Activated CD4-positive, alpha-beta memory T cell treated with anti-CD3 and anti-CD28 coated beads, Interleukin-2, amount 10 ng/mL, durations not matched to agents 7 days and 5 days (primary cell): ENCODE measurements at regions of chr1 and their contacts with region 1.

Region 1: DNA sequence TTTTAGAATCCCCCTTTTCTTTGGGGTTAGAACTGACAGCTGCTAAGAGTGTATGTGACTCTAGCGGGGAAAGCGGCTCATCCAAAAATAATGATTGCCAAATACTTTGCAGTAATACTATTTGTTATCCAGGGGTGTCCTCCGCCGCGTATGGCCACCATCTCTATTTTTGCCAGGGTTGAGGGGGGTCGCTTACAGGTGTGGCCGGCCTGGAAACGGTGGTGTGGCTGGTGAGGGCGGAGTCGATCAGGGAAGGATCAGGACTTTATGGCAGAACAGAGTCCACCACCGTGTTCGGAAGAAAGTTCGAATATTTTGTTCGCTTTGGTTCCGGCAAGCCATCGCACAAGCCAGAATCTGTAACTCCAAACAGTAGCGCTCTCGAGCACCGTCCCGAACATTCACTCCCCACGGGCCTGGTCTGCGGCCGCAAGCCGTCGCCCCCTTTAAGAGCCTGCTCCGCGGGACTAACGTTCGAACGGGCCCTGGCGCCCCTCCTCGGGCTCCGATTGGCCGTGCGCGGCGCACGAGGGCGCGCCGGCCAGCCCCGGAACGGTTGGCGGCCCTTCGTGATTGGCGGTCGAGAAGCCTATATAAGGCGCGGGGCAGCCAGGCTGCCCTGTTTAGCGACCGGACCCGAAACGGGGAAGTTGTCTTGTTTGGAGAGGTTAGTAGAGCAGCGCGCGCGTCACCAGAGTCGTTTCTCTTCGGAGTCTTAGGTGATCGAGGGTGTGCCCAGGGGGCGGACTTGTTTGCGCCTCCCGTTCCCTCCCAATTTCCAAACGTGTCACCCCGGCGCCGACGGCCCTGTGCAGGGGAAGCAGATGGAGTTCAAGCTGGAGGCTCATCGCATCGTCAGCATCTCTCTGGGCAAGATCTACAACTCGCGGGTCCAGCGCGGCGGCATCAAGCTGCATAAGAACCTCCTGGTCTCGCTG is at the start of gene IER5:
- DNase-seq: peak; percentile 98
- H3K4me3 Mint-ChIP-seq: peak within 1 kb of the TSS; percentile 99
- H3K27ac Mint-ChIP-seq: peak within 1 kb of the TSS; percentile 98
- H3K4me1 Mint-ChIP-seq: peaks cover 55% of the 10 kb centered on the region
- H3K27me3 Mint-ChIP-seq: peaks cover 3% of the 10 kb centered on the region
- total RNA-seq, gene IER5: 41.6 to 43.9 TPM

Region 2: DNA sequence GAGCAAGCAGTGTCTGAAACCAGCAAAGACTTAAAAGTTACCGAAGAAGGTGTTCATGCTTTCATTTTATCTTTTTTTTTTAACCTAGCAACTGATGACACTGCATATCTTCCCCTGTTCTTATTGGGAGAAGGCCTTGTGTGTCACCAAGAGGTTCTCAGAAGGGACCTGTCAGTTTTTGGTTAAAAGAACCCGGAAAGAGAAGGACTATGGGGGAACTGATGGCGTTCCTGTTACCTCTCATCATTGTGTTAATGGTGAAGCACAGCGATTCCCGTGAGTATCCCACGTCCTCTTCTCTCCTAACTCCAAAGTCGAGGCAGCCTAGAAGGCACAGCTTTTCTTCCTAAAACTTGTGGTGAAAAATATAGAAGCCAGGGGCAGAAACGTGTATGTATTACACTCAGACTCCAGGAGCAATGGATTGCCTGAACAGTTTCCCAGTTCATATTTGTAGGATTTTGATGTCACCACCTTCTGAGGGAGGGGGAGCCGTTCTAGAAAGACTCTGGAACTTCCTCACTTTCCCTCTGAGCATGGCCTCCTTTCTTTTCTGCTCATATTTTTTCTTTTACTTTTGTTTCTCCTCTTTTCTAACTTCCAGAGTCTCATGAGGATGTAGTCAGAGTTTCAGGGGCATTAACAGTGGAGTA is 54.4 kb before region 1 on chr1 and contains the start of gene MR1:
- CTCF ChIA-PET with region 1: interaction called, 8 read pairs
- POLR2A ChIA-PET with region 1: interaction called, 66 read pairs
- DNase-seq: peak; percentile 43
- H3K4me3 Mint-ChIP-seq: peak within 1 kb of the TSS; percentile 91
- H3K27ac Mint-ChIP-seq: peak within 1 kb of the TSS; percentile 94
- H3K4me1 Mint-ChIP-seq: peaks cover 53% of the 10 kb centered on the region
- H3K27me3 Mint-ChIP-seq: no peaks in the 10 kb centered on the region
- total RNA-seq, gene MR1: 36.4 to 36.5 TPM

Region 3: DNA sequence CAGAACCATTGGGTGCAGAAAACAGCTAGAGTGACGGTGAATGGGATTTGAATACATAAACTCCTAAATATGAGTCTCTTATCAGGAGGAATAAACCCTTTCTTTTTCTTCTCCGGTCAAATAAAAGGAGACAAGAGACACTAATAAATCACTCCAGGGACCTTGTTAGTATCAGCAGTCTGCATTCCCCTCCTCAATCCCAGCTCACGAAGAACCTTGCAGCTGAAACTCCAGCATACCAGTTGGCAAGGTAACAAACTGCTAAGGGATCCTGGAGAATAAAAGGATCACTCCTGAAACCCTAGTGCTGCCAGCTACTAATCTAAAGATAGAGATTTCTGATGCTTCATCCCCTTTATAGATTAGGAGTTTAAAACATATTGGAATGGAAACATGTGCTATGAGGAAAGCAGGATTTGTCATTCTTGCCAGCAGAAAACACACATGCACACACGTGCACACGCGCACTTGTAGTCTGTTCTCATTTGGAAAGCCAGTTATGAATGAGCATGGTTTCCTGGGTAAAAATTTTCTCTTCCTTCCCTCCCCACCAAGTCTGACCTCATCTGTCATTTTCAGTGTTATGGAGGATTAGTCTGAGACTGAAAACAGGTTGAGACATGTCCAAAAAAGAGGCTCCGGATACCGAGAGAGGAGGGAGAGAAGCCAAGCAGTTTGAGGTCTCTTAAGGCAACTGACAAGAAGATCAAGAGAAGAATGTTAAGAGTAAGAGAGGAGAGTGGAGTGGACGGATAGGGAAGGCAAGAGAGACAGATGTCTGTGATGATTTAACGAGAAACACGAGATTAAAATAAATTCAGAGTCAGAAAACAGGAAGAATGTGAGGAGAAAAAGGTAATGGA is 11.0 kb after region 1 on chr1:
- CTCF ChIA-PET with region 1: interaction called, 55 read pairs
- POLR2A ChIA-PET with region 1: interaction called, 374 read pairs
- DNase-seq: peak; percentile 55
- H3K4me3 Mint-ChIP-seq: peak overlapping the region; percentile 54
- H3K27ac Mint-ChIP-seq: peak overlapping the region; percentile 90
- H3K4me1 Mint-ChIP-seq: peaks cover 90% of the 10 kb centered on the region
- H3K27me3 Mint-ChIP-seq: no peaks in the 10 kb centered on the region

Region 4: DNA sequence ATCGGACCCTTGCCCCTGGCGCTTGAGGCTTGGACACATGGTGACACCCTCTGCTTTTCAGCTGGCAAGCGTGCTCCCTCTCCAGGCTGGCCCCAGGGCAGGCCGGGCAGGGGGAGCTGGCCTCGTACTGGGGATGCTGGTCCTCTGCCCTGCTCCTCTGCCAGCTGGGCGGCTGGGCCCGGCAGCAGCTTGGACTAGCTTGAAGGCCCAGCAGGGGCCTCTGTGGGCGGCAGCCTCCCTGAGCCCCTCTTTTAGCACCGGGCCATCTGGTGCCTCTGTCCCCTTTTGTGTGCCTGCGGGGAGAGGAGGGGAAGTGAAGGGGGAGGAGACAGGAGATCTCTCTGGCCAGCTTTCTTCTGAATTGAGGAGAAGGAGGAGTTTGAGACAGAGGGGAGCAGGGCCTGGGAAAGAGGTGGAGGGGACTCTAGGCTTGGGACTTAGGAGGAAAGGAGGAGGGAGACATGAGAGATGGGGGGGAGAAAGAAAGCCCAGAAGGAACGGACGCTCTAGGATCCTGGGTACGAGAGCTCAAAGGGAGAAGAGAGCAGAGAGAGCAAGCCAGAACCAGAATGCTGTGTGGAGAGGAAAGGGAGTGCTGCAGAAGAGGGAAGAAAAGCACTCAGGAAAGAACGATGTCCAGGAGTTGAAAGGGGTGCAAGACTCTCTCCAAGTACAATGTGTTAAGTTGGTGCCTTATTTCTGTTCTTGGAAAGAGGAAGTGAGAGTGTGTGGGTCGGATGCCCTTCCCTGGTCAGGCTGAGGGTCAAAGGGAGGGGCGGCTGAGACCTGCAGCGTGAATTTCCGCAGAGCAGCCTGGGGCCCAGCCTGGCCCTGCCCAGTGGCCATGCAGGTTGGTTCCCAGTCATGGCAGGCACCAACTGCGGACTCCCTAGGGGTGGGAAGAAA is 40.5 kb after region 1 on chr1:
- CTCF ChIA-PET with region 1: interaction called, 4 read pairs
- POLR2A ChIA-PET with region 1: interaction called, 322 read pairs
- DNase-seq: no peak
- H3K4me3 Mint-ChIP-seq: no peak overlapping the region
- H3K27ac Mint-ChIP-seq: no peak overlapping the region
- H3K4me1 Mint-ChIP-seq: peaks cover 48% of the 10 kb centered on the region
- H3K27me3 Mint-ChIP-seq: no peaks in the 10 kb centered on the region

Region 5: DNA sequence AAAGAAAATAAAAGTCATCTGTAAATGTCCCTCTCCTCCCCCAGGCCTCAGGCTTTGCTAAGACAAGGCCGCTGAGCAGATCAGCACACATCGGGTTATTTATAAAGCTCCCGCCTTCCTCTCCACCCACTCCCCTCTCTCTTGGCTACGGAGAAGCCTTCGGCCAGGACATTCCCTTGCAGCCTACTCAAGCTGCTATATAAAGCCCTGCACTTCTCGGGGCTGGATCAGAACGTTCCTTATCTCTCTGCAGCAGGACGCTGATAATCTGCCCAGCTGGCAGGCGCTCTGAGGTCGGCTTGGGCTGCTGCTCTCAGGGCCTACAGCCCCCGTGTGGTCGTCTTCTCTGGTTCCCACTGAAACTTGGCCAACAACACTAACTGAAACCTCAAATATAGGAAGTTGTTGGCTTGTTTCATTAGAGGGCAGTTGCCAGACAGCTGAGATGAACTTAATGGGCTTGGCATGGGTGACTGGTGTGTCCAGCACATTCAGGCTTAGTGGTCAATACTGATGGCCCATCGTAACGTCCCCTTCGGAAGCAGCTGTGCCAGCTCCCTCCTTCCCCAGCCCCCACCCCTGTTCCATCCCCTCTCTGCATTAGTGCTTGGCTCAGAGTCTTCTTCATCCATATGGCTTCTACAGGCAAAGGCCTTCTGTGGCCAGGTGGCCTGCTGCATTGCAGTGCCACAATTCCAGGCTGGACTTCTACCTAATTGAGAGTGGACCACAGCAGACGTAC is 64.7 kb after region 1 on chr1:
- CTCF ChIA-PET with region 1: interaction called, 11 read pairs
- POLR2A ChIA-PET with region 1: interaction called, 43 read pairs
- DNase-seq: no peak
- H3K4me3 Mint-ChIP-seq: no peak overlapping the region
- H3K27ac Mint-ChIP-seq: no peak overlapping the region
- H3K4me1 Mint-ChIP-seq: peaks cover 51% of the 10 kb centered on the region
- H3K27me3 Mint-ChIP-seq: peaks cover 28% of the 10 kb centered on the region